ENCODE measurements at regions of chr20 and their contacts with region 1.

Region 1: GRCh38 chr20:8399947-8400346 is 267.9 kb downstream of the PLCB1 start:
- DNase-seq: no peak
- ATAC-seq: no peak
- H3K4me3 ChIP-seq: no peak overlapping the region
- H3K27ac ChIP-seq: no peak overlapping the region
- H3K4me1 ChIP-seq: no peaks in the 10 kb centered on the region
- H3K27me3 ChIP-seq: no peaks in the 10 kb centered on the region

Region 2: DNA sequence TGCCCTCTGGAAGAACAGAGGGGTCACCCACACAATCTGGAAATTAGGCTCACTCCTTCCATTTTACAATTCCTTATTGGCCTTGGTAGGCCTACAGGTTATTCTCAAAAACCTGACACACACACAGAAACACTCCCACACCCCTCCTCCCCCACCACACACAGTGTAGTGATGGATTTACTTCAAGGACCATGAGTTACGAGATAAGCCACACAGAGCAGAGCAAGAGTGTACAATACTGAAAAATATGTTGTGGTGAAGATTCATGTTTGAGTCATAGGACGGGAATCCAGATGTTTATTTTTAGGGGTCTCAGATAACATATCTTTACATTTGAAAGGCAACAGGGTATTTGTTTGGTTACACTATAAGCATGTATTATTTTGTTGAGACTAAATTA is 24.1 kb after region 1 on chr20:
- intact Hi-C with region 1: loop called in 1 of 2 experiments (anchors 1 kb)
- DNase-seq: no peak
- ATAC-seq: no peak
- H3K4me3 ChIP-seq: no peak overlapping the region
- H3K27ac ChIP-seq: no peak overlapping the region
- H3K4me1 ChIP-seq: no peaks in the 10 kb centered on the region
- H3K27me3 ChIP-seq: no peaks in the 10 kb centered on the region

Region 3: GRCh38 chr20:8473459-8473858 is 73.5 kb after region 1 on chr20:
- intact Hi-C with region 1: no loop called
- DNase-seq: no peak
- ATAC-seq: no peak
- H3K4me3 ChIP-seq: no peak overlapping the region
- H3K27ac ChIP-seq: no peak overlapping the region
- H3K4me1 ChIP-seq: no peaks in the 10 kb centered on the region
- H3K27me3 ChIP-seq: no peaks in the 10 kb centered on the region

Region 4: DNA sequence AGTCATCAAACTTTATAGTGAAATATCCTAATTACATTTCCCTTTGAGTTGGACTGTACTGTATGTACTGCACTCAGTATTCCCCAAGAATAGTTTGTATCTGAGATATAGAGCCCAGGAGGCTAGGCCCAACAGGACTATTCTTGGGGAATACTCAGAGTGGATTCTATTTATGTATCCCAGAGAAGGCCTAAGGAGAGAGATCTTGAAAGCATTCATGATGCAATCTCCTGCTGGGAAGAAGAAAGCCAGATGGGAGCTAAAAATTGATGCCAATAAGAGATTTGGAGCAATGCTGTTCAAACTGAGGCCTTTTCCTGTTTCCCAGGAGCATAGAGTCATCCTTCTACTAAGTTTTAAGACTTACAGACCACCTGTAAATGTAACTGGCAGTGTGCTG is 216.8 kb after region 1 on chr20:
- intact Hi-C with region 1: no loop called
- DNase-seq: no peak
- ATAC-seq: peak; percentile 60
- H3K4me3 ChIP-seq: no peak overlapping the region
- H3K27ac ChIP-seq: no peak overlapping the region
- H3K4me1 ChIP-seq: no peaks in the 10 kb centered on the region
- H3K27me3 ChIP-seq: no peaks in the 10 kb centered on the region